ENCODE measurements at regions of chr1 and their contacts with region 1.

Region 1: GRCh38 chr1:203267347-203267846 is 37.9 kb upstream of the BTG2 start:
- DNase-seq: peak; percentile 85 to 89
- ATAC-seq: peak; percentile 76 to 83
- H3K4me3 ChIP-seq: peak overlapping the region; percentile 53
- H3K27ac ChIP-seq: peak overlapping the region; percentile 85 to 91
- H3K4me1 ChIP-seq: peaks cover 7% of the 10 kb centered on the region; the same call in 1 of the 3 replicates
- CTCF ChIP-seq: peak; percentile 95
- EP300 ChIP-seq: no peak
- POLR2A ChIP-seq: peak; percentile 61
- RAD21 ChIP-seq: peak; percentile 77 to 79

Region 2: DNA sequence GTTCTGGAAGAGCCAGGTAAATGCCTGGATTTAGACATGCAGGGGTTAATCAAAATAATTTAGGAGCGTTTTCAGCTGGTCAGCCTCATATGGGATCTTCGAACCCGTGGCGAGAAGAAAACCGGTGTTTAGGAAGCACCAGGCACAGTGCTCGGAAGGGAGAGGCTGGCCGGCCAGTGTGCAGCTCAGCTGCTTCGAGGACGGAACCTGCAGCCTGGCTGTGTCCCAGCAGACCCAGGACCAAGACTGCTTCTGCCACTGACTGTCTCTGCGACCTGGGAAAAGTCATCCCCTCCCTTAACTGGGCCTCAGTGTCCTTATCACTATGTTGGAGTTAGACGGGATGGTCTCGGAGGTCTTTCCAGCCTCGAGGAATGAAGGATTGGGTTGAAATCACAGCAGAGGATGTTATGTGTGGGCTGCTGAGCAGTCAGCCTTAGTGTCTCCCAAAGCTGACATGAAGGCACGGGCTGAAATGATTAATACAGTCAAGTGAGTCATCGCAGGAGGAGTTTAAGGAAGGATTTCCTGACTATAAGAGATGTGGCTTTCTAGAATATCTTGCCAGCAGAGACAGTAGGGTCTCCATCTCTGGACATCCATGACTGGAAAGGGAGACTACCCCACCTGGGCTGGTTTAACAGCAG is 220.3 kb before region 1 on chr1:
- CTCF ChIA-PET with region 1: interaction called, 266 read pairs
- POLR2A ChIA-PET with region 1: no interaction called
- DNase-seq: peak; percentile 33 to 62
- ATAC-seq: peak; percentile 69 to 75; a peak in 5 of 6 replicates
- H3K4me3 ChIP-seq: no peak overlapping the region
- H3K27ac ChIP-seq: no peak overlapping the region
- H3K4me1 ChIP-seq: peaks cover 6% of the 10 kb centered on the region; the same call in 2 of the 3 replicates
- CTCF ChIP-seq: no peak
- EP300 ChIP-seq: no peak
- POLR2A ChIP-seq: no peak
- RAD21 ChIP-seq: no peak

Region 3: DNA sequence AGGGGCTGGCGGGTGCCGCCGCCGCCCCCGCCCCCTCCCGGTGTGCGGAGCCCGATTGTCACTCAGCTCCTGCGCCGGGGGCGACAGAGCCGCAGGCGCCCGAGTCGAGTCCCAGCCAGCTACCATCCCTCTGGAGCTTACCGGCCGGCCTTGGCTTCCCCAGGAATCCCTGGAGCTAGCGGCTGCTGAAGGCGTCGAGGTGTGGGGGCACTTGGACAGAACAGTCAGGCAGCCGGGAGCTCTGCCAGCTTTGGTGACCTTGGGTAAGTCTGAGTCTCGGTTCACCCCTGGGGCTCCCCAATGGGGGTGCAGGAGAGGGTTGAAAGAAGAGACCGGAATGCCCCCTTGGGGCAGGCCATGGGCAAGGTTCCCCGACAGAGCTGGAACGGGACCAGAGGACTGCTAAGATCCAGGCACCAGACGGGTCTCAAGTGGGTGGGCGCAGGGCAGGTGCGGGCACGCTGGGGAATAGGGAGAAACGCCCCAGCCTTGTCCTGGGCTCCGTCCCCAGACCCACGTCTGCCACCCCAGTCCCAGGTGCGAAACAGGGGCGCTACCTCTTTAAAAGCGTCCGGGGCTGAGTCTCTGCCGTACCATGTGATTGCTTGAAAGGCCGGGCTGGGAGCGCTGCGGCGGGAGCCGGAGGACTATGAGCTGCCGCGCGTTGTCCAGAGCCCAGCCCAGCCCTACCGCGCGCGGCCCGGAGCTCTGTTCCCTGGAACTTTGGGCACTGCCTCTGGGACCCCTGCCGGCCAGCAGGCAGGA is 139.5 kb before region 1 on chr1 and contains the start of gene ADORA1:
- CTCF ChIA-PET with region 1: interaction called, 29 read pairs
- POLR2A ChIA-PET with region 1: no interaction called
- DNase-seq: peak; percentile 43 to 55
- ATAC-seq: peak; percentile 88 to 93
- H3K4me3 ChIP-seq: peak within 1 kb of the TSS; percentile 41
- H3K27ac ChIP-seq: peak within 1 kb of the TSS; percentile 32 to 67; a peak in 4 of 6 replicates
- H3K4me1 ChIP-seq: peaks cover 23% of the 10 kb centered on the region; the same call in 1 of the 3 replicates
- CTCF ChIP-seq: no peak
- EP300 ChIP-seq: no peak
- POLR2A ChIP-seq: no peak
- RAD21 ChIP-seq: no peak
- polyA plus RNA-seq, gene ADORA1: 0.48 and 0.50 TPM in 2 replicates

Region 4: DNA sequence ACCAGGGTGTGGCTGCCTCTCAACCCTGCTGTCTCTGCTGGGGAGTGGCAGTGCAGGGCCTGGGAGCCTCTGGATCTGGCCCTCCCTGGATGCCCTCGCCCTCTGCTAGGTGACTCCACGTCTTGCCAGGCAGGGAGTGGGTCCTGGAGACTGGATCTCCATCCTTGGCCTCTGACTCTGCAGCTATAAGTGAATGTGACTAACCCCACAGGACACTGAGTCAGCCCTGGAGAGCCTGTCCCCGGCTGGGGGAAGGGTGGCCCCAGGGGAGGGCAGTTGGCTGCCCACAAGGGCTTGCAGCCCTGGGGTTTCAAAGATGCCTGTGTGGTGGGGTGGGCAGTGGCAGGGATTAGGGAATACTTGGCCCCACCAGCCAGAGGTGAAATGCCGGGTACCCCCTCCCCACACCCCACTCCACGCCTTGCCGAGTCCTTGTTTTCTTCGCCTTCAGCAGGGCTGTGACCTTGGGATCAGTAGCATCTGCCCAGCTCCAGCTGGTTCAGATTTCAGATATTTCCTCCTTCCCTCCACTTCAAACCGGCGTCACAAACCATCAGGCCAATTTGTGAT is 89.8 kb before region 1 on chr1:
- CTCF ChIA-PET with region 1: interaction called, 19 read pairs
- POLR2A ChIA-PET with region 1: no interaction called
- DNase-seq: peak; percentile 29 to 43
- ATAC-seq: peak; percentile 60 to 63
- H3K4me3 ChIP-seq: no peak overlapping the region
- H3K27ac ChIP-seq: peak overlapping the region; percentile 76 to 81
- H3K4me1 ChIP-seq: peaks cover 32% of the 10 kb centered on the region
- CTCF ChIP-seq: no peak
- EP300 ChIP-seq: no peak
- POLR2A ChIP-seq: no peak
- RAD21 ChIP-seq: no peak

Region 5: DNA sequence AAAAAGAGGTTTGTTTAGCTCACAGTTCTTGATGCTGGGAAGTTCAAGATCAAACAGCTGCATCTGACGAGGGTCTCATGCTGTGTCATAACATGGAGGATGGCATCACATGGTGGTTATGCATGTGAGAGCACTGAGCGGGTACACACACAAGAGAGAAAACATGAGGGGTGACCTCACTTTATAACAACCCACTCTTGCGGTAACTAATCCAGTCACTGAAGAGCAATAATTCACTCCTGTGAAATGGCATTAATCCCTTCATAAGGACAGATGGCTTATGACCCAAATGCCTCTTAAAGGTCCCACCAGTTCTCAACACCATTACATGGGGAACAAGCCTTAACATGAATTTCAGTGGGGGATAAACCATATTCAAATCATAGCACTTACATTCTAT is 14.7 kb before region 1 on chr1:
- CTCF ChIA-PET with region 1: interaction called, 41 read pairs
- POLR2A ChIA-PET with region 1: no interaction called
- DNase-seq: no peak
- ATAC-seq: no peak
- H3K4me3 ChIP-seq: no peak overlapping the region
- H3K27ac ChIP-seq: no peak overlapping the region
- H3K4me1 ChIP-seq: peaks cover 8% of the 10 kb centered on the region; the same call in 1 of the 3 replicates
- CTCF ChIP-seq: no peak
- EP300 ChIP-seq: no peak
- POLR2A ChIP-seq: no peak
- RAD21 ChIP-seq: no peak

Region 6: DNA sequence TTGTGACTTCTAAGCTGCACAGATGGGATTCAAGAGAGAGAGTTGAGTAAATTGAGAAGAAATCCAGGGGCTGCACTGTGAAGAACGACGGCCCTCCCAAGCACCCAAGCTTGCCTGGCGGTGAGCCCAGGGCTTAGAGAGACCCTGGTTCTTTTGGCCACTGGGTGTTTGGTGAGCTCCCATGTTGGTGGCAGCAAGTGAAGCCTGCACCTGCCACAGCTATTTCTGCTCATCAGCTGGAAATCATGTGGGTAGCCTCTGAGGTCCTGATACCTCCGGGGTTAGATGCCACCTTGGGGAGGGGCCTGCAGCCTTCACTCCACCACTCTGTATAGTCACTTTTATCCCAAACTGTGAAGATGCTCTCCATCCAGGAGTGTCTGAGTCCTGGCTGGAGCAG is 31.8 kb after region 1 on chr1:
- CTCF ChIA-PET with region 1: interaction called, 36 read pairs
- POLR2A ChIA-PET with region 1: no interaction called
- DNase-seq: no peak
- ATAC-seq: no peak
- H3K4me3 ChIP-seq: no peak overlapping the region
- H3K27ac ChIP-seq: no peak overlapping the region
- H3K4me1 ChIP-seq: no peaks in the 10 kb centered on the region
- CTCF ChIP-seq: no peak
- EP300 ChIP-seq: no peak
- POLR2A ChIP-seq: no peak
- RAD21 ChIP-seq: no peak

Region 7: DNA sequence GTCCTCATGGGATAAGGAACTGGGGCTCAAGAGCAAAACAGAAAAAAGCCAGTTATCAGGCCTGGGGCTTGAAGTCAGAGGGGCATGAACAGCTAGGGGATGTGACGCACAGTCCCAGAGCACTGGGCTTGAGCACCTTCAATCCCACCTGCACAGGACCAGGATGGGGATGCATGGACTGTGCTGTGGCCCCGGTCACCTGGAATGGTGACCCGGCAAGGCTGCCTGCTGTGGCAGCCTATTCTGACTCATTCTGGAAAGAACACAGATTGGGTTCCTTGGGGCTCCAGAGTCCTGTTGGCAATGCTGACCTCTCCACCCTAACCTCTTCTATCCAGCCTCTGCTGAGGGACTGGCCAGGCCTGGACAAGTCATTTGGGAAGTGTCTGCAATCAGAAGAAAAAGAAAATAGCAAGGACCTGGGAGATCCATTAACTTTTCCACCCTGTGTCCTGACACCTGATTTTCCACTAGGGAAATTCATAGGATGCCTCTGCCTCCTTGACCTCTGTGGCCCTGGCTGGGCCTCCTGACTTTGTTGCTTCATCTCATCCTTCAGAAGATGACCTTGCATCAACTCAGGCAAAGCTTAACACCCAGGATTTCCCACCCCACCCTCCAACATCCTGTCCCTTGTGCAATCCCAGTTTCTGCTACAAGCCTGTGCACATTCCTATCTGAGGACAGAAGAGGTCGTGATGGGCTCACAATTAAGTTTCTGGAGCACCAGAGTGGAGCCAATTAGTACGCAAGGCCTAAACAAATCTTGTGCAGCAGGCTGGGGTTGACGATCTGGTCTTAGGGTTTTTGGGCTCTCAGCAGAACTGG is 101.4 kb after region 1 on chr1:
- CTCF ChIA-PET with region 1: no interaction called
- POLR2A ChIA-PET with region 1: no interaction called
- DNase-seq: peak in 1 of 2 experiments; percentile 11
- ATAC-seq: no peak
- H3K4me3 ChIP-seq: no peak overlapping the region
- H3K27ac ChIP-seq: no peak overlapping the region
- H3K4me1 ChIP-seq: no peaks in the 10 kb centered on the region
- CTCF ChIP-seq: no peak
- EP300 ChIP-seq: no peak
- POLR2A ChIP-seq: no peak
- RAD21 ChIP-seq: peak in 1 of 2 experiments; percentile 30; a peak in 1 of 5 replicates

Region 8: GRCh38 chr1:203390298-203390697 is 122.9 kb after region 1 on chr1:
- CTCF ChIA-PET with region 1: no interaction called
- POLR2A ChIA-PET with region 1: no interaction called
- DNase-seq: no peak
- ATAC-seq: no peak
- H3K4me3 ChIP-seq: no peak overlapping the region
- H3K27ac ChIP-seq: no peak overlapping the region
- H3K4me1 ChIP-seq: no peaks in the 10 kb centered on the region
- CTCF ChIP-seq: no peak
- EP300 ChIP-seq: no peak
- POLR2A ChIP-seq: no peak
- RAD21 ChIP-seq: no peak

Region 9: GRCh38 chr1:203486618-203487370 is 219.4 kb after region 1 on chr1:
- CTCF ChIA-PET with region 1: interaction called, 38 read pairs
- POLR2A ChIA-PET with region 1: no interaction called
- DNase-seq: no peak
- ATAC-seq: no peak
- H3K4me3 ChIP-seq: no peak overlapping the region; the same call in 2 of the 3 replicates
- H3K27ac ChIP-seq: peak overlapping the region; percentile 76 to 88; a peak in 4 of 6 replicates
- H3K4me1 ChIP-seq: peaks cover 5% of the 10 kb centered on the region; the same call in 1 of the 3 replicates
- CTCF ChIP-seq: no peak
- EP300 ChIP-seq: no peak
- POLR2A ChIP-seq: no peak
- RAD21 ChIP-seq: no peak

Measured in A549 (cell line).